B cell (primary cell): ENCODE measurements at regions of chr12 and their contacts with region 1.

Region 1: GRCh38 chr12:57238854-57239554 is 9.5 kb downstream of the SHMT2 start:
- DNase-seq: peak; percentile 93
- ATAC-seq: peak; percentile 46
- H3K4me3 ChIP-seq: peak overlapping the region; percentile 19 to 79 (median 75)
- H3K4me3 Mint-ChIP-seq: peak overlapping the region; percentile 89
- H3K27ac ChIP-seq: no peak overlapping the region
- H3K27ac Mint-ChIP-seq: peak overlapping the region; percentile 92
- H3K4me1 ChIP-seq: peaks cover 92 to 99% of the 10 kb centered on the region in 2 donors
- H3K4me1 Mint-ChIP-seq: peaks cover 92% of the 10 kb centered on the region
- H3K27me3 ChIP-seq: peaks cover 0 to 70% (median 30%) of the 10 kb centered on the region in 4 experiments
- H3K27me3 Mint-ChIP-seq: peaks cover 12% of the 10 kb centered on the region
- CTCF ChIP-seq: peak; percentile 100

Region 2: DNA sequence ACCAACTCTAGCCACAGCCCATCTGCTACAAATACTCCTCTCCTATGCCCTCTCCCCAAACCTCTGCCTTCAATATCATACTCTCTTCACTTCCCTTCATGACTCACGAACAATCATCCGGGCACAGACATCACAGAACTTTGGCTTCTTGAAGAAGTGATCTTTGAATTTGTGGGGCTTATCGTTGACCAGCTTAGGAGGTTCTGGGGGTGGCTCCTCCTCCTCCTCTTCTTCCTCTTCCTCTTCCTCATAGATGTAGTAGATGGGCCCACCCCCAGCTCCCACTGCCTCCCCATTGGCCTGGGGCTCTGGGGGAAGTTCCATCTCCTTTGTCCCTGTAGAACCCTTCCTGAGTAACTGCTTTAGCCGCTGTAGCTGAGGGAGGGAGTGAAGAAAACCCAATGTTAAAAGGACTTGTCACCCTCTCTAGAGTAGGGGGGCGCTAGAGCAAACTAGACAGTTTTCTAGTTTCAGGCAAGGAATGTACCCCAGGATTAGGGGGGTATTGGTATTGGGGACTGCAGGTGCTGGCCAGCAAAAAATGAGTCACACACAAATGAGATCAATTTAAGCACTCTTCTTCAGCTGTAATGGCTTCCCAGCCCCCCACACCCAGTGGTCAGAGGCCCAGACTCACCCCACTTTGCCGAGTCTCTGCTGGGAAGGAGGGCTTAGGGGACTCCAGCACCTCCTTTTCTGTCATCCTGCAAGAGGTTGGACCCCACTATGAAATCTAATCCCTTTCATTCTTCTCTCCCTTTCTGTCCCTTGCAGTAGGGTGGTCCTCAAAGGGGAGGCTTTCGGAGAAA is 10.1 kb after region 1 on chr12:
- CTCF ChIA-PET with region 1: interaction called, 360 read pairs
- POLR2A ChIA-PET with region 1: no interaction called
- intact Hi-C with region 1: no loop called
- DNase-seq: no peak
- ATAC-seq: peak; percentile 24
- H3K4me3 ChIP-seq: peak overlapping the region in 1 of 5 experiments; percentile 21
- H3K4me3 Mint-ChIP-seq: peak overlapping the region; percentile 44
- H3K27ac ChIP-seq: no peak overlapping the region
- H3K27ac Mint-ChIP-seq: no peak overlapping the region
- H3K4me1 ChIP-seq: peaks cover 8 to 12% of the 10 kb centered on the region in 2 donors
- H3K4me1 Mint-ChIP-seq: peaks cover 12% of the 10 kb centered on the region
- H3K27me3 ChIP-seq: peaks cover 0 to 10% (median 2%) of the 10 kb centered on the region in 4 experiments
- H3K27me3 Mint-ChIP-seq: no peaks in the 10 kb centered on the region
- CTCF ChIP-seq: no peak

Region 3: DNA sequence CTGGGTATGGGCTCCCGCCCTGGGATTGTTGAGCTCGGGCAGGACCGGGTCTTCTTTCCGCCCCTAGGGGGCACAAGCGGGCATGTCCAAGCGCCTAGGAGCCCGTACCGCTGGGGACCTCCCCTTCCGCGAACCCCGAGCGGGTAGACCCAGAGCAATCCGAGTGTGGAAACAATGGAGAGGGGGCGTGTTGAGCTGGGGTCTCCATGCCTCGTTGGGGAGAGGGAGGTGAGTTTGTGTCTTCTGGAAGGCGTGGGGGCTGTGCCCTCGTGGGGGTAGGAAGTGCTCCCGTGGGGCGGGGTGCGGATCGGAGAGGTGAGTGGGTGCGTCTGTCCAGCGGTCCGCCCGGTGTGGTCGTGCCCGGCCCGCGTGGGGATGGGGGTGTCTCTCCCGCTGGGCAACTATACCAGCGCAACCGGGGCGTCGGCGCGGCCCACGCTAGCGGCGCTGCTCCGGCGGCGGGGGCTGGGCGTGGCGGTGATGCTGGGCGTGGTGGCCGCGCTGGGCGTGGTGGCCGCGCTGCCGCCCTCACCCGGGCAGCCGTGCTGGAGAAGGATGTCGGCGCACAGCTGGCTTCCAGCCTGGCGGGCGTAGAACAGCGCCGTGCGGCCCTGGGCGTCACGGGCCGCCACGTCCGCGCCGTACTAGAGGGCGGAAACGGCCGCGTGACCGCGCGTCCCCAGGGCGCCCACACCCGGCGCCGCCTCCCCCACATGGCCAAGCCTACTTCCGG is 487.3 kb after region 1 on chr12:
- CTCF ChIA-PET with region 1: no interaction called
- POLR2A ChIA-PET with region 1: no interaction called
- intact Hi-C with region 1: no loop called
- DNase-seq: no peak
- ATAC-seq: peak; percentile 31
- H3K4me3 ChIP-seq: peak overlapping the region in 2 of 5 experiments; percentile 10 to 43
- H3K4me3 Mint-ChIP-seq: peak overlapping the region; percentile 44
- H3K27ac ChIP-seq: no peak overlapping the region
- H3K27ac Mint-ChIP-seq: peak overlapping the region; percentile 46
- H3K4me1 ChIP-seq: peaks cover 8 to 16% of the 10 kb centered on the region in 2 donors
- H3K4me1 Mint-ChIP-seq: peaks cover 16% of the 10 kb centered on the region
- H3K27me3 ChIP-seq: no peaks in the 10 kb centered on the region
- H3K27me3 Mint-ChIP-seq: no peaks in the 10 kb centered on the region
- CTCF ChIP-seq: no peak